Caco-2 (cell line): ENCODE measurements at regions of chr22 and their contacts with region 1.

Region 1: DNA sequence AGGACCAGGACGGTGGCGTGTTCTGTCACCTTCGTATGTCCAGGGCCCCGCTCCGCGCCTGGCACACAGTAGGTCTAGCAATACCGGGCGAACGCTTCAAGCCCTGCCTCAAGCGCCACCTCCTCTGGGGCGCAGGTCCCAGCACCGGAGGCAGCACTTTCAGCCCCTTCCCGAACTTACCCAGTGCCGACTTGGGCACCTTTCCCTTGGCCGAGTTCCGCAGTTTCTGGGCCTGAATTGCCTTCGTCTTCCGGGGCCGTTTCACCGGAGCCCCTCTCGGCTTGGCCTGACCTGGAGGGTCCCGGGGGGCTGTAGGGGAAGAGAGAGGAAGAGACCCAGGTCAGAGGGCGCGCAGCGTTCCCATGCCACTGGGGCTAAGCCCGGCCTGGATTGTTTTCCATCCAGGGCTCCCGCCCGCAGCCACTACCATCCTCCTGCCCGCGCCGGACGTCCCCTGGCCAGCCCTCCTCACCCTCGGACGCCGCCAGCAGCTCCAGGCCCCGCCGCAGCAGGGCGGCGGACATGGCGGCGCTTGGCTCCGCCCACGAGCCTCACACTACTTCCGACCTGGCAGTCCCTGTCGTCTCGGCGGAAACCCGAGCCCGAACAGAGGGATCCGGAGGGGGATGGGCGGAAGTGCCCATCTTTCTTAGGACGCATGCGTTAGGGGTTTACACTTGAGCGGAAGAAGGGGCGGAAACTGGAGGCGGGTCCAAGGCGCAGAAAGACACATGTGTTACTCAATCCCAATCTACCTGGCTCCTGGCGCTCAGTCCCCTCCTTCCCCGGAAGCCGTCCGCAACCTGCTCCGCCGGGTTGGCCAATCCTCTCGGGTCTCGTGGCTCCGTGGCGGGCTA is at the start of gene RPS19BP1:
- DNase-seq: peak; percentile 99
- H3K4me3 ChIP-seq: peak within 1 kb of the TSS; percentile 93
- H3K4me3 Mint-ChIP-seq: peak within 1 kb of the TSS; percentile 94
- H3K27ac Mint-ChIP-seq: peak within 1 kb of the TSS; percentile 94
- H3K4me1 ChIP-seq: peaks cover 36% of the 10 kb centered on the region
- H3K4me1 Mint-ChIP-seq: peaks cover 34% of the 10 kb centered on the region
- H3K27me3 ChIP-seq: no peaks in the 10 kb centered on the region
- H3K27me3 Mint-ChIP-seq: no peaks in the 10 kb centered on the region
- CTCF ChIP-seq: no peak
- total RNA-seq, gene RPS19BP1: 85.8 and 88.0 TPM in 2 replicates

Region 2: GRCh38 chr22:39319270-39320022 is 213.0 kb before region 1 on chr22 and contains the start of gene RPL3:
- CTCF ChIA-PET with region 1: no interaction called
- POLR2A ChIA-PET with region 1: interaction called, 8 read pairs
- intact Hi-C with region 1: loop called (anchors 5 kb)
- DNase-seq: peak; percentile 93 to 97
- H3K4me3 ChIP-seq: peak within 1 kb of the TSS; percentile 67
- H3K4me3 Mint-ChIP-seq: peak within 1 kb of the TSS; percentile 96
- H3K27ac Mint-ChIP-seq: peak within 1 kb of the TSS; percentile 100
- H3K4me1 ChIP-seq: peaks cover 20% of the 10 kb centered on the region
- H3K4me1 Mint-ChIP-seq: peaks cover 8% of the 10 kb centered on the region
- H3K27me3 ChIP-seq: no peaks in the 10 kb centered on the region
- H3K27me3 Mint-ChIP-seq: peaks cover 4% of the 10 kb centered on the region
- CTCF ChIP-seq: no peak
- total RNA-seq, gene RPL3: 1,668 and 1,699 TPM in 2 replicates

Region 3: DNA sequence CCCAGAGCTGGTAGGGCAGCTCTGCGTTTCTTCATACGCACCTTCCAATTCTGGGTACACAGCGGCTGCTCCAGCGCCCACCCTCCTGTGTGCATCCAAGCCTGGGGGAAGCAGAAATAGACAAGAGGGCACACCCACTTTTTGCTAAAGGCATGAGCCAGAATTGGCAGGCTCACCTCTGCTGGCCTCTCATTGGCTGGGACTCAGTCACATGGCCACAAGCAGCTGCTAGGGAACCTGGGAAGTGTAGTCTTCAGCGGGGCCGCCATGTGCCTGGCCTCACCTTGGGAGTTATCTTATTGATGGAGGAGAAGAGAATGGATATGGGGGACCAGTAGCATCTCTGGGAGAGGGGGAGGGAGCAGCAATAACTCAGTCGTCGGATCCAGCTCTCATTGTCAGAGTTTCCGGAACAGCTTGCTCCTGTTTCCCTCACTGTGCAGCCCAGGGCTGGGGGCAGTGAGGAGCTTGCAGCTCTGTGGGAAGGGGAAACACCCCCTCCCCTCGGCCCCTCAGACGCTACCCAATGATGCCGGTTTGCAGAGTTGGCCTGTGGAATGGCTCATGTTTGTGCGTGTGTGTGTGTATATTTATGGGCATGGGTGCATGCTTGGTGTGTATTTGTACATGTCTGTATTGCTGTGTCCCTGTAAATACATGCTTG is 42.2 kb before region 1 on chr22:
- CTCF ChIA-PET with region 1: interaction called, 15 read pairs
- POLR2A ChIA-PET with region 1: interaction called, 3 read pairs
- intact Hi-C with region 1: loop called (anchors 5 kb)
- DNase-seq: peak; percentile 75 to 84
- H3K4me3 ChIP-seq: no peak overlapping the region
- H3K4me3 Mint-ChIP-seq: no peak overlapping the region
- H3K27ac Mint-ChIP-seq: no peak overlapping the region
- H3K4me1 ChIP-seq: peaks cover 16% of the 10 kb centered on the region
- H3K4me1 Mint-ChIP-seq: peaks cover 17% of the 10 kb centered on the region
- H3K27me3 ChIP-seq: no peaks in the 10 kb centered on the region
- H3K27me3 Mint-ChIP-seq: no peaks in the 10 kb centered on the region
- CTCF ChIP-seq: no peak

Region 4: GRCh38 chr22:39520054-39520891 is 12.2 kb before region 1 on chr22 and contains the start of gene ATF4:
- CTCF ChIA-PET with region 1: interaction called, 36 read pairs
- POLR2A ChIA-PET with region 1: interaction called, 40 read pairs
- intact Hi-C with region 1: no loop called
- DNase-seq: peak; percentile 97 to 98
- H3K4me3 ChIP-seq: peak within 1 kb of the TSS; percentile 91
- H3K4me3 Mint-ChIP-seq: peak within 1 kb of the TSS; percentile 79
- H3K27ac Mint-ChIP-seq: peak within 1 kb of the TSS; percentile 98
- H3K4me1 ChIP-seq: peaks cover 26% of the 10 kb centered on the region
- H3K4me1 Mint-ChIP-seq: peaks cover 38% of the 10 kb centered on the region
- H3K27me3 ChIP-seq: no peaks in the 10 kb centered on the region
- H3K27me3 Mint-ChIP-seq: no peaks in the 10 kb centered on the region
- CTCF ChIP-seq: no peak
- total RNA-seq, gene ATF4: 610 and 647 TPM in 2 replicates

Region 5: GRCh38 chr22:39723899-39724351 is 191.5 kb after region 1 on chr22:
- CTCF ChIA-PET with region 1: no interaction called
- POLR2A ChIA-PET with region 1: no interaction called
- intact Hi-C with region 1: no loop called
- DNase-seq: peak; percentile 46 to 48
- H3K4me3 ChIP-seq: no peak overlapping the region
- H3K4me3 Mint-ChIP-seq: peak overlapping the region; percentile 30
- H3K27ac Mint-ChIP-seq: peak overlapping the region; percentile 70
- H3K4me1 ChIP-seq: peaks cover 16% of the 10 kb centered on the region
- H3K4me1 Mint-ChIP-seq: peaks cover 12% of the 10 kb centered on the region
- H3K27me3 ChIP-seq: no peaks in the 10 kb centered on the region
- H3K27me3 Mint-ChIP-seq: no peaks in the 10 kb centered on the region
- CTCF ChIP-seq: no peak

Region 6: DNA sequence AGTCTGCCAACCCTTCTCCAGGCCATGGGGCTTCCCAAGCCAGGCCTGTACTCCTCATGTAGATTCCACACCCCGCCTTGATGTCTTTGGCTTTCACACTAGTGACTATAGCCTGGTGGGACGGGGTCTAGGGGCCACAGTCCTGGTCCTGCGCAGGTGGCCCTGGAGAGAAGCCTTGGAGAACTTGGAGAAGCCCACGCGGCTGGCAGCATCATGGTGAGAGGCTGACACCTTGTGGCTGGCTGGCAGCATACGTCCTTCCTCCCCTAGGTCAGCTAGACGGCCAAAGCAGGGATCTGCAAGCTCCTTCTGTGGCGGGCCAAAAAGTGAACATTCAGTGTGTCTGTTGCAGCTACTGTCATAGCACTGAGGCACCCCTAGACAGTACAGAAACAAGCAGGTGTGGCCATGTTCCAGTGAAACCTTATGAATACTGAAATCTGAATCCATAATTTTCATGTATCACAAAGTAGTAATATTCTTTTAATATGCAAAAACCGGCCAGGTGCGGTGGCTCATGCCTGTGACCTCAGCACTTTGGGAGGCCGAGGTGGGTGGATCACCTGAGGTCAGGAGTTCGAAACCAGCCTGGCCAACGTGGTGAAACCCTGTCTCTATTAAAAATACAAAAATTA is 504.3 kb after region 1 on chr22:
- CTCF ChIA-PET with region 1: interaction called, 9 read pairs
- POLR2A ChIA-PET with region 1: no interaction called
- intact Hi-C with region 1: loop called (anchors 2 kb)
- DNase-seq: peak; percentile 73 to 74
- H3K4me3 ChIP-seq: no peak overlapping the region
- H3K4me3 Mint-ChIP-seq: no peak overlapping the region
- H3K27ac Mint-ChIP-seq: no peak overlapping the region
- H3K4me1 ChIP-seq: no peaks in the 10 kb centered on the region
- H3K4me1 Mint-ChIP-seq: peaks cover 11% of the 10 kb centered on the region
- H3K27me3 ChIP-seq: no peaks in the 10 kb centered on the region
- H3K27me3 Mint-ChIP-seq: peaks cover 5% of the 10 kb centered on the region
- CTCF ChIP-seq: peak; percentile 80 to 87